ENCODE measurements at regions of chr10 and their contacts with region 1.

Region 1: DNA sequence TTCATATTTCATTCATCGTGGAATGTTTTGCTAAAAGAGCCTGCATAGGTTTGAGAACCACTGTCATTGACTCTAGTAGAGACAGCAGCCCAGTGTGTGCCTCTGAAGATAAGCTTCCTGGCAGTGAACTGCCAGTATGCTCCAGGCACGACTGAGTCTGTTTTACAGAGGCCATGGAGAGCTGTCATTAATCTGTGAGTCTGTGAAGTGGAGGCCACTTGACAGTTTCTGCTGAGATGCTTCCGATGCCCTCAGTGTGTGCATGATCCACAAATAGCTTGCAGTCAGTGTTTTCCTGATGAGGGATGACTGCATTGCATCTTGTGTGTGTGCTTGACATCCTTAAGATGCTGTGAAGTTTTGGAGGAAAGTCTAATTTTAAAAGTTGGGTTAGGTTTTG is 162.2 kb downstream of the PFKFB3 start:
- DNase-seq: peak in 2 of 3 donors; percentile 13 to 49
- H3K4me3 ChIP-seq: no peak overlapping the region
- H3K27ac ChIP-seq: no peak overlapping the region
- H3K4me1 ChIP-seq: no peaks in the 10 kb centered on the region
- H3K27me3 ChIP-seq: no peaks in the 10 kb centered on the region

Region 2: GRCh38 chr10:6348096-6348874 is 16.6 kb before region 1 on chr10:
- CTCF ChIA-PET with region 1: interaction called, 10 read pairs
- POLR2A ChIA-PET with region 1: no interaction called
- DNase-seq: peak; percentile 90 to 99 (median 97)
- H3K4me3 ChIP-seq: peak overlapping the region in 3 of 7 experiments; percentile 38 to 55 (median 40)
- H3K27ac ChIP-seq: peak overlapping the region; percentile 81 to 82
- H3K4me1 ChIP-seq: peaks cover 15 to 33% (median 24%) of the 10 kb centered on the region in 4 experiments
- H3K27me3 ChIP-seq: no peaks in the 10 kb centered on the region

Region 3: DNA sequence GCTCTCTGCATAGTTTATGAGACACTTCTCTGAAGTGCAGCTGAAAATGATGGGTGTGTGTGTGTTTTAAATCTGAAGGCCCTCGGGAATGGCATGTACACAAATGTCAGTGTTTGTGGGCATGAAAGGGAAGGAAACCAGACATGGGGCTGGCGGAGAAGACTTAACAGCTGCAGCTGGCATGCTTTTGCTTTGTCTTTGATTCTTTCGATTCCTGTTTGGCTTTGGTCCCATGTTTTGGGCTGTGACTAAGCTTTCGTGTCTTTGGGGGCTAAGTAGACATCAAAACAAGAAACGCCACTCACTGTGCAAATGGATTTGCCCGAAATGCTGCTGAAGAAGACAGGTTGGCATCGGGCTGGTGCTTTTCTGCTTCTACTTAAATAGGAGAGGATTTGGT is 17.2 kb after region 1 on chr10:
- CTCF ChIA-PET with region 1: interaction called, 11 read pairs
- POLR2A ChIA-PET with region 1: no interaction called
- DNase-seq: peak; percentile 85 to 98 (median 98)
- H3K4me3 ChIP-seq: peak overlapping the region in 2 of 7 experiments; percentile 20 to 32
- H3K27ac ChIP-seq: no peak overlapping the region
- H3K4me1 ChIP-seq: peaks cover 10 to 21% (median 19%) of the 10 kb centered on the region in 4 experiments
- H3K27me3 ChIP-seq: no peaks in the 10 kb centered on the region

Region 4: DNA sequence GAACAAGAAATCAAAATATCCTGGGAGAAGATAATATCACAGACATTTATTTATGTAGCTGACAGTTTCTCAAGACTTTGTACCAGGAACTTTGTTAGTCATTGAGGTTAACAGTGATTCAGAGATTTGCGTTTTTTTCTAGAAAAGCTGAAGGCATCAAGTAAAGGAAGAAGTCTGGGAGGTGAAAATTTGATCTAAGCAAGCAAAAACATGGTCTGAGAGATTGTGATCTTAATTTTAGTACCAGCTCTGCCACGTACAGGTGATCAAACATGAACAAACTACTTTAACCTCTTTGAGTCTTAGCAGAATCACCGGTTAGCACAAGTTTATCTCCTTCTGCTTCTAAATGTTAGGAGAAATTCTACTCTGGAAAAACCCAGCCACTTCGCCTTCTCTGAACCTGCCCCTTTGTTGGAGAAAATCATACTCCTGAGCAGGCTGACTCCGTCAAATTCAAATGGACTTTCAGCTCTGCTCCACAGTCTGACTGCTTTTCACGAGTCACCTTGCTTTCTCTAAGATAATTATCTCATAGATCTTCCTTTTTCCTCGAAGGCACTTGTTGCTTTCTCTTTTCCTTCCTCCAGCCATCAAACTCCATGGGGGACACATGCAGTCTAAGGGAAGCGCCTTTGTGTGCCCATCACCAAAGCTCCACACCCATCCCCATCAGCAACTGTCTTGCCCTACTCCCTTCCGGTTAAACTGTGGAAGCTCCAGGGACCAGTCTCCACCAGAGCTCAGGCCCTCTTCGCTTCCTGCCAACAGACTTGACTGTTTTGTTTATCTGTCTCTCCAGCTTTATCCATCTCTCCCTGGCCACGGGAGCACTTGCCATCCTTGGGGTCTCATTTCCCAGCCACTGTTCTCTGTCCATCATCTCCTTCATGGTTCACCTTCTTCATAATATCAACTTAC is 128.9 kb after region 1 on chr10:
- CTCF ChIA-PET with region 1: no interaction called
- POLR2A ChIA-PET with region 1: no interaction called
- DNase-seq: peak in 2 of 3 donors; percentile 48 to 54
- H3K4me3 ChIP-seq: no peak overlapping the region
- H3K27ac ChIP-seq: no peak overlapping the region
- H3K4me1 ChIP-seq: peaks cover 0 to 32% (median 15%) of the 10 kb centered on the region in 4 experiments
- H3K27me3 ChIP-seq: no peaks in the 10 kb centered on the region

Measured in common myeloid progenitor, CD34-positive (primary cell).